Natural killer cell (primary cell): ENCODE measurements at regions of chr13 and their contacts with region 1.

Region 1: GRCh38 chr13:79405829-79406596 is at the start of gene RBM26:
- DNase-seq: peak; percentile 91 to 98
- ATAC-seq: peak; percentile 89 to 92 (median 89)
- H3K4me3 ChIP-seq: peak within 1 kb of the TSS; percentile 92
- H3K4me3 Mint-ChIP-seq: peak within 1 kb of the TSS; percentile 83
- H3K27ac ChIP-seq: peak within 1 kb of the TSS; percentile 96
- H3K27ac Mint-ChIP-seq: no peak within 1 kb of the TSS
- H3K4me1 ChIP-seq: peaks cover 9% of the 10 kb centered on the region
- H3K4me1 Mint-ChIP-seq: peaks cover 13 to 24% of the 10 kb centered on the region in 2 donors
- H3K27me3 ChIP-seq: no peaks in the 10 kb centered on the region
- H3K27me3 Mint-ChIP-seq: no peaks in the 10 kb centered on the region
- CTCF ChIP-seq: no peak
- total RNA-seq, gene RBM26: 59.3 to 70.3 (median 66.5) TPM

Region 2: GRCh38 chr13:78658635-78659449 is 747.2 kb before region 1 on chr13 and contains the start of gene OBI1:
- intact Hi-C with region 1: loop called (anchors 10 kb)
- DNase-seq: peak; percentile 90 to 94
- ATAC-seq: peak; percentile 96 to 98 (median 98)
- H3K4me3 ChIP-seq: peak within 1 kb of the TSS; percentile 92
- H3K4me3 Mint-ChIP-seq: peak within 1 kb of the TSS; percentile 99
- H3K27ac ChIP-seq: peak within 1 kb of the TSS; percentile 74
- H3K27ac Mint-ChIP-seq: peak within 1 kb of the TSS; percentile 90 to 97
- H3K4me1 ChIP-seq: peaks cover 6% of the 10 kb centered on the region
- H3K4me1 Mint-ChIP-seq: peaks cover 41% of the 10 kb centered on the region in 2 donors
- H3K27me3 ChIP-seq: no peaks in the 10 kb centered on the region
- H3K27me3 Mint-ChIP-seq: peaks cover 0 to 3% of the 10 kb centered on the region in 2 donors
- CTCF ChIP-seq: no peak
- total RNA-seq, gene OBI1: 4.9 to 7.8 (median 5.1) TPM

Region 3: GRCh38 chr13:79417741-79418140 is 11.7 kb after region 1 on chr13:
- intact Hi-C with region 1: no loop called
- DNase-seq: no peak
- ATAC-seq: no peak
- H3K4me3 ChIP-seq: no peak overlapping the region
- H3K4me3 Mint-ChIP-seq: no peak overlapping the region
- H3K27ac ChIP-seq: no peak overlapping the region
- H3K27ac Mint-ChIP-seq: no peak overlapping the region
- H3K4me1 ChIP-seq: no peaks in the 10 kb centered on the region
- H3K4me1 Mint-ChIP-seq: no peaks in the 10 kb centered on the region
- H3K27me3 ChIP-seq: no peaks in the 10 kb centered on the region
- H3K27me3 Mint-ChIP-seq: no peaks in the 10 kb centered on the region
- CTCF ChIP-seq: no peak

Region 4: GRCh38 chr13:79451500-79451962 is 45.5 kb after region 1 on chr13:
- intact Hi-C with region 1: loop called (anchors 1 kb)
- DNase-seq: peak; percentile 78 to 90
- ATAC-seq: peak; percentile 96 to 100 (median 98)
- H3K4me3 ChIP-seq: no peak overlapping the region
- H3K4me3 Mint-ChIP-seq: peak overlapping the region; percentile 45
- H3K27ac ChIP-seq: peak overlapping the region; percentile 24
- H3K27ac Mint-ChIP-seq: peak overlapping the region; percentile 84 to 87
- H3K4me1 ChIP-seq: peaks cover 15% of the 10 kb centered on the region
- H3K4me1 Mint-ChIP-seq: peaks cover 46 to 50% of the 10 kb centered on the region in 2 donors
- H3K27me3 ChIP-seq: no peaks in the 10 kb centered on the region
- H3K27me3 Mint-ChIP-seq: no peaks in the 10 kb centered on the region
- CTCF ChIP-seq: no peak